Caco-2 (cell line): ENCODE measurements at regions of chr2 and their contacts with region 1.

Region 1: GRCh38 chr2:159615140-159615951 is 1.0 kb downstream of the BAZ2B start:
- DNase-seq: peak; percentile 93 to 96
- H3K4me3 ChIP-seq: peak overlapping the region; percentile 93
- H3K4me3 Mint-ChIP-seq: peak overlapping the region; percentile 86
- H3K27ac Mint-ChIP-seq: peak overlapping the region; percentile 93
- H3K4me1 ChIP-seq: peaks cover 10% of the 10 kb centered on the region; the same call in 1 of the 2 replicates
- H3K4me1 Mint-ChIP-seq: peaks cover 15% of the 10 kb centered on the region
- H3K27me3 ChIP-seq: no peaks in the 10 kb centered on the region
- H3K27me3 Mint-ChIP-seq: no peaks in the 10 kb centered on the region
- CTCF ChIP-seq: no peak

Region 2: GRCh38 chr2:159362816-159363251 is 252.5 kb before region 1 on chr2:
- CTCF ChIA-PET with region 1: no interaction called
- POLR2A ChIA-PET with region 1: no interaction called
- intact Hi-C with region 1: no loop called
- DNase-seq: no peak
- H3K4me3 ChIP-seq: no peak overlapping the region
- H3K4me3 Mint-ChIP-seq: no peak overlapping the region
- H3K27ac Mint-ChIP-seq: no peak overlapping the region
- H3K4me1 ChIP-seq: 0 out of 2 replicates have a peak, but pooled peaks cover 5% of the 10 kb centered on the region
- H3K4me1 Mint-ChIP-seq: peaks cover 14% of the 10 kb centered on the region
- H3K27me3 ChIP-seq: no peaks in the 10 kb centered on the region
- H3K27me3 Mint-ChIP-seq: no peaks in the 10 kb centered on the region
- CTCF ChIP-seq: no peak

Region 3: DNA sequence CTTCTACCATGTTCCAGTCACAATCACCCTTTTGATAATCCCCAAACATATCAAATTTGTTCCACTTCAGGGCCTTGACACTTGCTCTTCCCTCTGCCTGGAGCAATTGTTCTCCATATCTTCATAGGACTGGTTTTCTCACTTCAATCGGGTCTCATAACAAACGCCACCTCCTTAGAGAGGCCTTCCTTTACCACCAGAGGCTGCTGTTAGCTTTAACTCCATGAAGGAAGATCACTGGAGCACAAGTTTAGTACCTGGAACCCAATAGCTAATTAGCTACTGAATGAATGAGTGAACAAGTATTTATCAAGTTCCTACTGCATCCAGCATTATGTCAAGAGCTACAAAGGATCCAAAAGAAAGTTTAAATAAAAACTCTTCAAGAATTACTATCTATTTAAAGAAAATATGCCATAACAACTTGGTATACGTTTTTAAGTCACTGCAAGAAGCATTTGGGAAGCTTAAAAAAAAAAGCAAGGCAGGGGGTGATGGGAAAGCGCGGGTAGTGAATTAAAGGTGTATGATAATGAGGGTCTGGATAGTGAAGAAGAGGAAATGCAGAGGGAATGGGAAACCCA is 57.8 kb before region 1 on chr2:
- CTCF ChIA-PET with region 1: interaction called, 7 read pairs
- POLR2A ChIA-PET with region 1: interaction called, 15 read pairs
- intact Hi-C with region 1: loop called (anchors 1 kb)
- DNase-seq: peak; percentile 40 to 57
- H3K4me3 ChIP-seq: no peak overlapping the region
- H3K4me3 Mint-ChIP-seq: no peak overlapping the region
- H3K27ac Mint-ChIP-seq: no peak overlapping the region
- H3K4me1 ChIP-seq: no peaks in the 10 kb centered on the region
- H3K4me1 Mint-ChIP-seq: peaks cover 10% of the 10 kb centered on the region
- H3K27me3 ChIP-seq: no peaks in the 10 kb centered on the region
- H3K27me3 Mint-ChIP-seq: no peaks in the 10 kb centered on the region
- CTCF ChIP-seq: peak; percentile 36 to 89

Region 4: DNA sequence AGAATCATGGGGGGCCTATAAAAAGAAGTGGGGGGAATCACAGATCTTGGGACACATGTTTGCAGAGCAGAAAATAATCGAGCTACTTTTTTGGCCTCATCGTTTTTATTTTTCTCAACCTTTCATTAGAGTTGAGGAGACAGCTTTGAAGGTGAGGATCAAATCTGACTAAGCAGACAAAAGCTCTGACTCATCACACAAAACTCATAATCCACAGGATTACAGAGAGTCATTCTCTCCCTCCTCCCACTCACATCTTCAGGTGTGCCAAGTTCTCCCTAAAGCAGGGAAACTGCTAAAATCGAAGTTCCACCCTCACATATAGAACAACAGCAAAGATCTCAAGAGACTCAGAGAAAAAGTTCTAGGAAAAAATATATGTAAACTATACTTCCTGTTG is 14.6 kb before region 1 on chr2:
- CTCF ChIA-PET with region 1: interaction called, 7 read pairs
- POLR2A ChIA-PET with region 1: interaction called, 11 read pairs
- intact Hi-C with region 1: no loop called
- DNase-seq: peak in 1 of 2 experiments; percentile 35
- H3K4me3 ChIP-seq: no peak overlapping the region
- H3K4me3 Mint-ChIP-seq: peak overlapping the region; percentile 48
- H3K27ac Mint-ChIP-seq: peak overlapping the region; percentile 78
- H3K4me1 ChIP-seq: peaks cover 17% of the 10 kb centered on the region
- H3K4me1 Mint-ChIP-seq: peaks cover 22% of the 10 kb centered on the region
- H3K27me3 ChIP-seq: no peaks in the 10 kb centered on the region
- H3K27me3 Mint-ChIP-seq: no peaks in the 10 kb centered on the region
- CTCF ChIP-seq: no peak

Region 5: DNA sequence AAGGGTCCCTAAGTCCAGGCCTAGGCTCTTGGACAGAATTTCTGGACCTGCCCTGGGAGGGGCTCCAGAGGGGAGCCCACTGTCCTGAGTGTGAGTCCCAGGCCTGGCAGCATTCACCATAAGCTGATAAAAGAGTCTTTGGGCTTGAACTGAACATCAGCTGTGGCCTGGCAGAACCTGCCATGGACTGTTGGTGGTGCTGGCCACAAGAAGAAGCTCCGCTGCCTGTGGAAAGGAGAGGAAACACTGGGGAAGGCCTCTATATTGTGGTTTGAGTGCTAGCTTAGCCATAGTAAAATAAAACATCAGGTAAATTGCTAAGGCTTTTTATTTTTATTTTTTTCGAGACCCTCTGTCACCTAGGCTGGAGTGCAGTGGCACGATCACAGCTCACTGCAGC is 21.9 kb after region 1 on chr2:
- CTCF ChIA-PET with region 1: no interaction called
- POLR2A ChIA-PET with region 1: interaction called, 20 read pairs
- intact Hi-C with region 1: no loop called
- DNase-seq: no peak
- H3K4me3 ChIP-seq: no peak overlapping the region
- H3K4me3 Mint-ChIP-seq: no peak overlapping the region
- H3K27ac Mint-ChIP-seq: peak overlapping the region; percentile 48
- H3K4me1 ChIP-seq: peaks cover 14% of the 10 kb centered on the region
- H3K4me1 Mint-ChIP-seq: peaks cover 25% of the 10 kb centered on the region
- H3K27me3 ChIP-seq: no peaks in the 10 kb centered on the region
- H3K27me3 Mint-ChIP-seq: no peaks in the 10 kb centered on the region
- CTCF ChIP-seq: no peak

Region 6: DNA sequence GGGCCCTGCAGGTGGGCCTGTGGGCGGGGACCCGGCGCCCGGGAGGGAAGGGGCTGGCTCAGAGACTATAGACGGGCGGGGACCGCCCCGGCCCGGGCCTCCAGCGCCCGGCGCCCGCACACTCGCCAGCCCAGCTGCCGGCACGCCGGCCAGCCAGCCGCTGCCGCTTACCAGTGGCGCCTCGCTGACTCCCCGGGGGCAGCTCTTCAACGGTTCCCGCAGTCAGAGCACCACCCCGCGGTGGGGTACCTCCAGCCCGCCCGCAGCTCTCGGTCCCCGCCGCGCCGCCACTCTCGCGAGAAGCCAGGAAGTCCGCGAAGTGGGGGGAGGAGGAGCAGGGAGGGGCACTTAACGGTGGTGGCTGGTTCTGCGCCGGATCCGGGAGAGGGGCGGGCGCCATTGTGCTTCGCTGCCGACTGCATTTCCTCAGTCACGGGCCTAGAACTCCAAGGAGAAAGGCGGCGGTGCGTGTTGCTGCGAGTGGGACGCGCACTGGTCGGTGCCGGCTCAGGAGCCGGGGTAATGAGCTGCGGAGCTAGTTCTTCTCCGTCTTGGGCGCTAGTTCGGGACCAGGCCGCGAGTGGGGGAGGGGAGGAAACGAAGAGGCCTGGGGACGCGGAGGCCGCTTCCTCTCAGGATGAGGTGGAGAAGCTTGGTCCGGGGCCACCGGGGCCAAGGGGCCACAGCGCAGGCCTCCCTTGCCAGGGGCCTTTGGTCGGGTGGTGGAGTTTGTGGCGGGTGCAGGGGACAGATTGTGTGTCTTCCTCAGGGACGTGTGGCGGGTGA is 97.0 kb after region 1 on chr2 and contains the start of gene MARCHF7:
- CTCF ChIA-PET with region 1: interaction called, 11 read pairs
- POLR2A ChIA-PET with region 1: interaction called, 22 read pairs
- intact Hi-C with region 1: loop called (anchors 1 kb)
- DNase-seq: peak; percentile 98 to 99
- H3K4me3 ChIP-seq: peak within 1 kb of the TSS; percentile 100
- H3K4me3 Mint-ChIP-seq: peak within 1 kb of the TSS; percentile 98
- H3K27ac Mint-ChIP-seq: peak within 1 kb of the TSS; percentile 99
- H3K4me1 ChIP-seq: peaks cover 19% of the 10 kb centered on the region
- H3K4me1 Mint-ChIP-seq: peaks cover 18% of the 10 kb centered on the region
- H3K27me3 ChIP-seq: no peaks in the 10 kb centered on the region
- H3K27me3 Mint-ChIP-seq: no peaks in the 10 kb centered on the region
- CTCF ChIP-seq: peak in 1 of 2 experiments; percentile 66
- total RNA-seq, gene MARCHF7: 82.6 and 90.7 TPM in 2 replicates

Region 7: DNA sequence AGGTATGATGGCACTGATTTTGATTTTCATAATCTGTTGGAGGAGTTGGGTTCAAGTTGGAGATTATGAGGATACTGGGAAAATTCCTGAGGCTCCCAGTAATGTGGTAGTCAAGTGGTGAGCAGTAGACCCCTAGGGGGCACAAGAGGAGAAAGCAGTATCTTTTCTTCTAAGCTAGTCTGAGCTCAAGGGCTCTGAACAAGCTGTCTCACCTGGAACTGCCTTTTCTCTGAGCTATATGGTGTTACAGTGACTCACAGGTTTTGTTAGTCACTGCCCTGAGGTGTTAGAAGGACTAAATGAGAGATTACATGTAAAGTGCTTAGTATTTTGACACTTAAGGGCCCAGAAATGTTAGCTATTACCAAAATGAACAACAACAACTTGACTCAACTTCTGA is 140.4 kb after region 1 on chr2:
- CTCF ChIA-PET with region 1: no interaction called
- POLR2A ChIA-PET with region 1: interaction called, 16 read pairs
- intact Hi-C with region 1: no loop called
- DNase-seq: peak in 1 of 2 experiments; percentile 45
- H3K4me3 ChIP-seq: no peak overlapping the region
- H3K4me3 Mint-ChIP-seq: no peak overlapping the region
- H3K27ac Mint-ChIP-seq: no peak overlapping the region
- H3K4me1 ChIP-seq: peaks cover 25% of the 10 kb centered on the region
- H3K4me1 Mint-ChIP-seq: peaks cover 9% of the 10 kb centered on the region
- H3K27me3 ChIP-seq: no peaks in the 10 kb centered on the region
- H3K27me3 Mint-ChIP-seq: no peaks in the 10 kb centered on the region
- CTCF ChIP-seq: peak in 1 of 2 experiments; percentile 43